ENCODE measurements at regions of chr14 and their contacts with region 1.

Region 1: GRCh38 chr14:32576088-32576795 is 247.1 kb downstream of the AKAP6 start:
- DNase-seq: peak; percentile 10 to 35
- ATAC-seq: peak; percentile 76 to 89
- H3K4me3 ChIP-seq: no peak overlapping the region
- H3K27ac ChIP-seq: no peak overlapping the region
- H3K4me1 ChIP-seq: peaks cover 3 to 36% of the 10 kb centered on the region in 2 donors
- H3K27me3 ChIP-seq: no peaks in the 10 kb centered on the region
- CTCF ChIP-seq: peak; percentile 83 to 96 (median 88)
- POLR2A ChIP-seq: no peak

Region 2: DNA sequence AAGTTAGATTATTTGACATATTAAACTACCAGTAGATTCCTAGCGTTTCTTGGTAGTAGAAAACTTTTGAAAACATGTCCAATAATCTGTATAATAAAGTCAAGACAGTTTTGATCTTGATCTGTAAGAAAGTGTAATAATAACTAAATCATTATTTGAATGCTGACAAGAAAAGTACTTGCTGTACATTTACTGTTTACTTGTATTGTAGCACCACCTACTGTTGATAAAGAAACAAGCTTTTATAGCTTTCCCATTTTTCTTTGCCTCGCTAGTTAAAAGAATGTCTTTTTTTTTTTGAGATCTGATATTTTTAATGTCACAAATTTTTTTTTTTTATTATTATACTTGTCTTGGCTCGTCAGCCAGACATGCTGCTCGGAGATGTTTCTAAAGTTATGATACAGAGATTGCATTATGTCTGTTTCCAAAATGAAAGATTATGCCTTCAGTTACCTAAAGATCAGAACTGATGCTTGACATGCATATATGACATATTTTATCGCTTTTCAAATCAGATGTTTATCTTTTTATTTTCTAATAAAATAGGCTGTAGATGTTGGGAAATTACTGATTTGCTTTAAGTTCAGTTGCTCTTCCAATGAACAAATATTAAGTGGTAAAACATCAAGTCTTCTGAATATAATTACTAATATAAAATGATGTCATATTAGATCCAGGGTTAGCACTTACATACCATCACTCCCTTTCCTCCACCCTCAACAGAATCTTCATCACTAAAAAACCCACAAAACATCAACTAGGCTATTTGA is 106.7 kb before region 1 on chr14:
- in situ Hi-C with region 1: no loop called
- intact Hi-C with region 1: no loop called
- DNase-seq: no peak
- ATAC-seq: no peak
- H3K4me3 ChIP-seq: no peak overlapping the region
- H3K27ac ChIP-seq: peak overlapping the region in 2 of 4 donors; percentile 75 to 77
- H3K4me1 ChIP-seq: peaks cover 37 to 50% of the 10 kb centered on the region in 2 donors
- H3K27me3 ChIP-seq: no peaks in the 10 kb centered on the region
- CTCF ChIP-seq: peak; percentile 23 to 56 (median 49)
- POLR2A ChIP-seq: no peak

Region 3: GRCh38 chr14:32710731-32711680 is 134.8 kb after region 1 on chr14:
- in situ Hi-C with region 1: no loop called
- intact Hi-C with region 1: loop called (anchors 5 kb)
- DNase-seq: no peak
- ATAC-seq: peak in 1 of 2 donors; percentile 47
- H3K4me3 ChIP-seq: peak overlapping the region in 1 of 4 donors; percentile 8
- H3K27ac ChIP-seq: peak overlapping the region in 1 of 4 donors; percentile 36
- H3K4me1 ChIP-seq: peaks cover 25 to 40% of the 10 kb centered on the region in 2 donors
- H3K27me3 ChIP-seq: no peaks in the 10 kb centered on the region
- CTCF ChIP-seq: peak; percentile 35 to 53 (median 41)
- POLR2A ChIP-seq: no peak

Region 4: GRCh38 chr14:32939254-32940065 is 363.2 kb after region 1 on chr14:
- in situ Hi-C with region 1: no loop called
- intact Hi-C with region 1: loop called (anchors 5 kb)
- DNase-seq: peak; percentile 63 to 65
- ATAC-seq: peak; percentile 60 to 73
- H3K4me3 ChIP-seq: peak overlapping the region; percentile 61 to 72 (median 70)
- H3K27ac ChIP-seq: peak overlapping the region; percentile 66 to 82 (median 74)
- H3K4me1 ChIP-seq: peaks cover 9 to 16% of the 10 kb centered on the region in 2 donors
- H3K27me3 ChIP-seq: peaks cover 4 to 34% (median 12%) of the 10 kb centered on the region in 3 donors
- CTCF ChIP-seq: no peak
- POLR2A ChIP-seq: no peak

Region 5: GRCh38 chr14:33432407-33433023 is 856.3 kb after region 1 on chr14:
- in situ Hi-C with region 1: loop called in 1 of 4 experiments (anchors 25 kb)
- intact Hi-C with region 1: no loop called
- DNase-seq: no peak
- ATAC-seq: no peak
- H3K4me3 ChIP-seq: no peak overlapping the region
- H3K27ac ChIP-seq: no peak overlapping the region
- H3K4me1 ChIP-seq: no peaks in the 10 kb centered on the region
- H3K27me3 ChIP-seq: no peaks in the 10 kb centered on the region
- CTCF ChIP-seq: peak in 1 of 5 experiments; percentile 20
- POLR2A ChIP-seq: no peak

Region 6: GRCh38 chr14:34322940-34323418 is 1746.7 kb after region 1 on chr14:
- in situ Hi-C with region 1: loop called in 1 of 4 experiments (anchors 25 kb)
- intact Hi-C with region 1: loop called (anchors 10 kb)
- DNase-seq: peak in 1 of 2 donors; percentile 21
- ATAC-seq: peak in 1 of 2 donors; percentile 72
- H3K4me3 ChIP-seq: no peak overlapping the region
- H3K27ac ChIP-seq: no peak overlapping the region
- H3K4me1 ChIP-seq: peaks cover 0 to 3% of the 10 kb centered on the region in 2 donors
- H3K27me3 ChIP-seq: no peaks in the 10 kb centered on the region
- CTCF ChIP-seq: peak; percentile 29 to 74 (median 54)
- POLR2A ChIP-seq: no peak

Measured in gastrocnemius medialis (tissue), 4 donors.